ENCODE measurements at regions of chr5 and their contacts with region 1.

Region 1: GRCh38 chr5:40904205-40904993 is 4.9 kb upstream of the C7 start:
- DNase-seq: peak; percentile 56
- ATAC-seq: peak; percentile 95

Region 2: DNA sequence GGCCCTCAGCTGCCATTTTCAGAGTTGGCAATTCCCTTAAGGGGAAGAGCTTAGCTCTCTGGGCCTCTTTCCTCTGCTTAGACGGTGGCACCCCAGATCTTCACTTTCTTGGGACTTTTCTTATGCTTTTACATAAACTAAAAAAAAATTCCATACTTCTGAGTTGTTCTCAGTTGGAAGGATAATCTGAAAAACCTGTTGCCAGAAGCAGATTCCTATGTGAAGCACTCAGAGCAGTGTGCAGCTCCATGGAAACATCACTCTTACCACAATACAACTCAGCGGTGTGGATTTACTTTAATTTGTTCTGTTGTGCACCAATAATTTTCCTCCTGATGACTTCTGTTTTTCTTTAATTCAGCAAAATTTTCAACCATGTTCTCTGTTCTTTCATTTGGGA is 210.9 kb after region 1 on chr5:
- intact Hi-C with region 1: loop called (anchors 10 kb)
- DNase-seq: no peak
- ATAC-seq: no peak

Region 3: DNA sequence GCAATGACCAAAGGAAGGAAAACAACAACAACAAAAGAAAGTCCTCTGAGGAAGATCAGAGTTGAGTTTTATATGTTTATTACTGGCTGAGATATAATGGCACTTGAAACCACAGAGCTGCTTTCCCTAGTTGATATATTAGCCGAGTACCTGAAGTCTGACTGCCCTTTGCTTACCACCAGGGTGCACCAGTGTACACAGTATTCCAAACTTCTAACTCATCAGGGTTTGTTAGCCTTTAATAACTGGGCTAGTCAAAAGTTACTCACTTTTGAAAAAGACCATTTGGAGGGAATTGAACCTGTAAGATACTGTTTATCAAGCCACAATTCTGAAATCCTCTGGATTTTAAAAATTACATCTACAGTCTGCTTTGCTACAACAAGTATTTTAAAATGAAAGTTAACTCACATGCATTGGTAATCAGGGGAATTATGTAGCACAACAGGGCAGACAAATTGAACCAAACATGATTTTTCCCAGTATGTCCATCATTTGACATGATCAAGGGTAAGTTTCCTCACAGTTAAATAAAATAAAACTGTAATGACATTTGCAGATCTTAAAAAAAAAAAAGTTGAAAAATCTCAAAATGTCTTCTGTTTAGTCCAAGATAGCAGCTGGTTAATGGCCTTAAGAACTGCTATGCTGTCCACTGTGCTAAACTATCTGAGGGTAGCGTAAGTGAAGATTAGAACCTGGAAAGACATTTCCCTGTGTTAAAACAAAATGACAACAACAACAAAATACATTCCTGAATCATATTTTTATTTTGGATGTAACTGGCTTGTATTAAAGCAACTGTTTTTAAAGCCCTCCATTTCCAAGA is 366.2 kb after region 1 on chr5:
- intact Hi-C with region 1: loop called (anchors 10 kb)
- DNase-seq: no peak
- ATAC-seq: peak; percentile 95

Region 4: DNA sequence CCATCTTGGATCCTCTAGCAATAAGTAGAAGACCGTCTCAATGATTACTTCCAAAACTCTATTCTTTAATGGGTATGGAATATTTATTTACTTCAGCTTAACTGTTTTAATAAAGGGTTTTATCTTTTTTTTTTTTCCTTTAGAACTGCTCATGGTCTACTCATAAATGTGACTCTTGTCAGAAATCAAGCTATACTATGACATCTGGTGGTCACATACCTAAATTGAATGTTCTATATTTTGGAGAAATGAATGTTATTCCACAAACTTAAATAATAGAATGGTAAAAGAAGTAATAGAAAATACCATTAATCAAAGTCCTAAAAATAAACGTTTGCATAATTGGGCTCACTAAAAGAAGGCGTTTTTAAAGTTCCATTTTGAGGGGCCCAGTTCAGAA is 737.2 kb after region 1 on chr5:
- intact Hi-C with region 1: loop called (anchors 10 kb)
- DNase-seq: no peak
- ATAC-seq: peak; percentile 55

Region 5: DNA sequence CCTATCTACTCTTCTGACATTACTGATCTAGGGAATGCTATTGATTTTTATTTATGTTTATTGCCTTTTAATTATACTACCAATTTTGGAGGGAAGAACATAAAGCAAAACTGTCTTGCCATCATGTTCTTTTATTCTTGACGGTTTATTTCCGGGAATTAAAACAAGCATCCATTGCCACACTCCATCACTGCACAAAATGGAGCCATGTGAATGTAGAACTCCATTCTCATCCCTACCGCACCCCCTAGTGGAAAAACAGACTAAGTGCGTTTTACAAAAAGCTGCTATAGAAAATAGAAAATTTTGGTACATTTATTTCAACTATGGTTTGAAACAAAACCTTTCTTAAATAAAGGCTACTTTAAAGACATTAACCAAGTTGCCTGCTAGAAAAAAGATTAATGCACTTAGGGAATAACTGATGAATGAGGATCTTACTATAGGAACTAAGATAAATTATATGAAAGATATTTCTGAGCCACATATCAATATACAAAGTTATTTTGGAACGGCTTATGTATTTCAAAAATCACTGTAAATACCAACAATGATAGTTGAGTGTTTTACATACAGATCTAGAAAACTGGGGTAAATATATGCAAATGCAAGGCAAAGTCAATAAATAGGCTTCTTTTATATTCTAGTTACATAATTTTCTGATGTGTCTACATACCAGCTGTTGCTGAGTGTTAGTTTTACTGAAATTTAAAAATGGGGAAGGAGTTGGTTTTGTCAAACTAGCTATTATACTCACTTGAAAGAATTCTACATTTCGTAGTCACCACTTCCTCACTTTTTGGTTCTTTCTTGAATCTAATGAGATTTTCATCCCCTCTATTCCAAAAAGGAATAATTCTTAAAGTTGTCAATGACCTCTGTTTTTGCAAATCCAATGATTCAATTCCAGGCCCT is 939.3 kb after region 1 on chr5:
- intact Hi-C with region 1: loop called (anchors 10 kb)
- DNase-seq: no peak
- ATAC-seq: peak; percentile 84

Measured in Right ventricle myocardium superior (tissue), 1 donor.